Ascending aorta (tissue), 2 donors: ENCODE measurements at regions of chr9 and their contacts with region 1.

Region 1: DNA sequence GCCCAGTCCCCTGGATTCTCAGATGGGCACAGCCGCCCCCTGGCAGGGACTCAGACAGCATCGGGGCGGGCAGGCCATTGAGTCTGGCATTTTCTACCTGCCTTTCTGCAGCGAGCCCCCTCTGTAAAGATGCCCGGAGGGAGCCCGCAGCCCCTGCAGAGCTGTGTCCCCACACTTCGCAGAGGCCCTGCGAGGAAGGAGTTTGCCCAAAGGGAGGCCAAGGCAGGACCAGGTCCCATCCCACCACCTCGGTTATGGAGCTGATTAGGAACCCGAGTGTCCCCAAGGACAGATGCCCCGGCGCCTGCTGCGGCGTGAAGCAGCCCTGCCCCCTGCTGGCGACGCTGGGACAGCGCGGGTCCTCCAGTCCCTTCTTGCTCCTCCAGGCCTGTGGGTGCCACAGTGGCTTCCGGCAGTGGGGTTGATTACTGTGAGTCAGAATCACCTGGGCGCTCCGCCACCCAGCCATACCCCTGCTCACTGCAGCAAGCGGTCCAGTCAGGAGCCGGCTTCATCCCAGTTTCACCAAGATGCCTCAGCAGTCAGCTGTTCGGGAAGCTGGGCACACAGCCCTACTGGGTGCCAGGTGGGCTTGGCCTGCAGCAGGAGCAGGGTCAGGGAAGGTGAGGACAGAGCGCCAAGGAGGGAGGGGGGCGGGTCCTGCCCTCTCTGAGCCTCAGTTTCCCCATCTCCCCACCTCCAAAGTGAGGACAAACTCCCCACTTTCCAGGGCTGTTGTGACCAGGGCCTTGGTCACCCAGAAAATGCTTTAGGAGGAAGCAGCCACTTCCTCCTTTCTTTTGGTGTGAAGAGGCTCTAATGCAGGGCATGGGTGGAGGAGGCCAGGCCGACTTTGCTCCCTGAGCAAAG is 117.1 kb downstream of the RXRA start:
- DNase-seq: peak; percentile 73 to 95
- H3K4me3 ChIP-seq: no peak overlapping the region
- H3K27ac ChIP-seq: no peak overlapping the region
- H3K4me1 ChIP-seq: peaks cover 4 to 17% of the 10 kb centered on the region in 2 donors
- H3K27me3 ChIP-seq: no peaks in the 10 kb centered on the region
- CTCF ChIP-seq: peak; percentile 97 to 99 (median 98)

Region 2: DNA sequence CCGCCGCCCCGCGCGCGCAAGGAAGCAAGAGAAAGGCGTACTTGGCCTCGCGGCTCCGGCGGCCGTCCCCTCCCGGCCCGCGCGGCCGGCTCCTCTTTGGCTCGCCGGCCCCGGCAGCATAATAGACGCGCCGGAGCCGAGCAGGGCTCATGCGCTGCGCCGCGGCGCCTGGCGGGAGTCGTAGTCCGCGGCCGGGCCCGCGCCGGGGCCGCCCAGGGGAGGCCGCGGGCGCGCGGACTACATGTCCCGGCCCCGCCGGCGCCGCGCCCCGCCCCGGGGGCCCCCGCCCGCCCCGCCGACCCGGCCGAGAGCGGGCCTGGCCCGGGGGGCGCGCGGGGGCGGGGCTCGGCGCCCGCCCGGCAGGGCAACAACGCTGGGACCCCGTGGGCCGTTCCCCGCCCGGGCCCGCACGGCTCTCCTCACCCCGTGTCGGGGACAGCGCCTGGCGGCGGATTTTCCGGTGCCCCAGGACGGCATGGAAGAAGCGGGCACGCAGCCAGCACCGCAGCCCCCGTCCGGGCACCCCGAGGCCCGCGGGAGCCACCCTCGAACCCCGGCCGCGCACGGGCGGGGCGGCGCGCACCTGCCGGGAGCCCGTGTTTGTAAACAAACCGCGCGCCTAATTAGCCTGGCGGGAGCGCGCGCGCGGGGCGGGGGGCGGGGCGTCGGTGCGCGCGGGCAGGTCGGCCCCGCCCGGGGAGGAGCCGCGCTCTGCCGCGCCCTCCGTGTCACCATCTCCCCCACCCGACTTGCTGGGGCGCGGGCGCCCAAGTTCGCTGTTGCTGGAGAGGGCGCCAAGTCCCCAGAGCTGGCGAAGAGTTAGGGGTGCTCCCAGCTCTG is 375.3 kb before region 1 on chr9 and contains the start of gene BRD3:
- intact Hi-C with region 1: loop called (anchors 2 kb)
- DNase-seq: peak in 1 of 2 donors; percentile 91
- H3K4me3 ChIP-seq: peak within 1 kb of the TSS; percentile 98
- H3K27ac ChIP-seq: peak within 1 kb of the TSS; percentile 89 to 99
- H3K4me1 ChIP-seq: peaks cover 3 to 16% of the 10 kb centered on the region in 2 donors
- H3K27me3 ChIP-seq: no peaks in the 10 kb centered on the region
- CTCF ChIP-seq: no peak
- total RNA-seq, gene BRD3: 32.0 TPM

Region 3: GRCh38 chr9:134171316-134172197 is 271.8 kb before region 1 on chr9:
- intact Hi-C with region 1: loop called (anchors 1 kb)
- DNase-seq: no peak
- H3K4me3 ChIP-seq: no peak overlapping the region
- H3K27ac ChIP-seq: no peak overlapping the region
- H3K4me1 ChIP-seq: peaks cover 0 to 6% of the 10 kb centered on the region in 2 donors
- H3K27me3 ChIP-seq: peaks cover 7% of the 10 kb centered on the region
- CTCF ChIP-seq: no peak

Region 4: DNA sequence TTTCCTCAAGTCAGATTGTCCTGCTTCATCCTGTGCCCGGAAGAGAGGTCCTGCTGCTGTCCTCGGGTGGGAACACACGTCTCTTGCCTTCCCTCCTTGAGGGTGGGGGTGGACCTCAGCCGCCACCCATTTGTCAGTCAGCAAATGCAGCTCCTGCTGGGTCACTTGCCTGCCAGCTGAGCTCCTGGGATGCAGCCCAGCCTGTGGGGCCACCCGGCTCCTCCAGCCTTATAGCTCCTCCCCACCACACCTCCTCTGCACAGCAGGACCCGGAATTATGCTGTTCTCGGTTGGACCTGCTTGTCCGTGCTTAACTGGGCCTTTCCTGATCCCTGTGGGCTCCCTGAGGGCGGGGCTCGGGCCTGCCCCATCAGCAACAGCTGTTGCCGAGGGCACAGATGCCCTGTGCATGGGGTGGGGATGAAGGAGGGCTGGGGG is 64.5 kb before region 1 on chr9:
- intact Hi-C with region 1: loop called (anchors 5 kb)
- DNase-seq: no peak
- H3K4me3 ChIP-seq: no peak overlapping the region
- H3K27ac ChIP-seq: peak overlapping the region; percentile 3 to 58
- H3K4me1 ChIP-seq: peaks cover 38 to 84% of the 10 kb centered on the region in 2 donors
- H3K27me3 ChIP-seq: no peaks in the 10 kb centered on the region
- CTCF ChIP-seq: no peak

Region 5: DNA sequence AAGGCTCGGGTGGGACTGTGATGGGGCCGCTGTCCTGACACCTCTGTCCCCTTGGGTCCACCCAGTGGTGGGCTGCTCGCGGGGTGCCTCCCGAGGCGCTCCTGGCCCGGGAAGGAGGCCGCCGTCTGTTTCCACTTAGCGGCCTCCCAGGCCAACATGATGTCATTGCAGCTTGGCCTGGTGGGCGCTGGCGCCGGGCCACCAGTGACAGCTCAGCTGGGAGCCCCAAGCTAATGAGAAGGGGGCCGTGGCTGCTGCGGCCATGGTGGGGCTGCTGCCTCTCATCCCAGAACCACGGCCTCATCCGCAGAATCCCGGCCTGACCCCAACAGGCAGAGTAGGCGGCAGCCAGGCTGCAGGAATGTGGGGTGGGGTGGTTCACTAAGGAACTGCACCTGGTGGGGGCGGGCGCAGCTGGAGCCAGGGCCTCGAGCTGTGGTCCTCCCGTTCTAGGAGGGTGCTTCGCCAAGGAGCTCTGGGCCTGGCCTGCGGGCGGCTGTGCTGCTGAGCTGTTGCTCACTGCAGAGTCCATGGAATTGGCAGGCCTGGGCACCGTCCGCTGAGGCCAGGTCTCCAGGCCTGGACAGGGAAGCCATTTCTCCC is 74.7 kb after region 1 on chr9:
- intact Hi-C with region 1: no loop called
- DNase-seq: no peak
- H3K4me3 ChIP-seq: no peak overlapping the region
- H3K27ac ChIP-seq: no peak overlapping the region
- H3K4me1 ChIP-seq: no peaks in the 10 kb centered on the region
- H3K27me3 ChIP-seq: no peaks in the 10 kb centered on the region
- CTCF ChIP-seq: no peak